Transverse colon (tissue), 4 donors: ENCODE measurements at regions of chr2 and their contacts with region 1.

Region 1: GRCh38 chr2:15560988-15561573 is at the start of gene NBAS:
- DNase-seq: peak; percentile 90
- H3K4me3 ChIP-seq: peak within 1 kb of the TSS; percentile 69 to 84 (median 76)
- H3K27ac ChIP-seq: peak within 1 kb of the TSS; percentile 76 to 82 (median 80)
- H3K4me1 ChIP-seq: peaks cover 4 to 23% (median 17%) of the 10 kb centered on the region in 4 donors
- H3K27me3 ChIP-seq: no peaks in the 10 kb centered on the region
- CTCF ChIP-seq: no peak
- EP300 ChIP-seq: no peak
- POLR2A ChIP-seq: no peak
- total RNA-seq, gene NBAS: 30.6 to 43.2 (median 34.5) TPM

Region 2: DNA sequence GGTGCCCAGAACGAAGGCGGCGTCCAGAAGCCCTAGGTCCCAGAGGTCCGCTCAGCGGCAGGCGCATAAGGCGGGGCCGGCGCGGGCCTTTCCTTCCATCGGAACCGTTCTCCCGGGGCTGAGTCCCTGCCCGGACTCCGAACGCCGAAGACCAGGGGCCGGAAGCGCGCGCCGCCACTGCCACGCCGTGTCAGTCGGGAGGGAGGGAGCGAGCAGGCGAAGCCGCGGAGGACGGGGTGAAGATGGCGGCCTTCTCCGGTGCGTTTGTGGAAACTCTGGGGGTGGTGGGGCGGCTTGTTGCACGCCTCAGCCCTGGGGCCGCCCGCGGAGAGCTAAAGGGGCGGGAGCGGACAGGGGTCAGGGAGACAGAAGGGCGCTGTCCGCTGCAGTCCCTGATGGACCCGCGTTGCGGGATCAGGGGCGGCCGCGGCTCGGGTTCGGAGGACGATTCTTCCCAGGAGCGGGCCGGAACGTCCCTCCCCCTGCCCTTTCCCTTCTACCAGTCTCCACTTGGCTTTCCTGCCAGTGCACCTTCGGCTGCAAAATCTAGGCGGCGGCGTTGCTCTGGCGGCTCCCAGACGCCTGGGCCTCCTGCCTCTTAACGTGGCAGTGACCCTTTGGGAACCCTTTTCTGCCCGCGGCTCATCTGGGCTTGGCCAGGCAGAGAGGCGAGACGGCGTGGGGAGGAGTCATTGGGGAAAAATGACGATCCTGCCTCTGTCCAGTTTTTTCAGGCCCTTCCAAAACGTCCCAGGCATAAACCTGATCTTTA is 30.8 kb after region 1 on chr2 and contains the start of gene DDX1:
- in situ Hi-C with region 1: no loop called
- intact Hi-C with region 1: loop called (anchors 1 kb)
- DNase-seq: peak; percentile 87
- H3K4me3 ChIP-seq: peak within 1 kb of the TSS; percentile 67 to 99 (median 88)
- H3K27ac ChIP-seq: peak within 1 kb of the TSS; percentile 93 to 99 (median 95)
- H3K4me1 ChIP-seq: peaks cover 5 to 21% (median 19%) of the 10 kb centered on the region in 4 donors
- H3K27me3 ChIP-seq: no peaks in the 10 kb centered on the region
- CTCF ChIP-seq: no peak
- EP300 ChIP-seq: no peak
- POLR2A ChIP-seq: peak; percentile 81
- total RNA-seq, gene DDX1: 18.3 to 61.1 (median 49.9) TPM

Region 3: DNA sequence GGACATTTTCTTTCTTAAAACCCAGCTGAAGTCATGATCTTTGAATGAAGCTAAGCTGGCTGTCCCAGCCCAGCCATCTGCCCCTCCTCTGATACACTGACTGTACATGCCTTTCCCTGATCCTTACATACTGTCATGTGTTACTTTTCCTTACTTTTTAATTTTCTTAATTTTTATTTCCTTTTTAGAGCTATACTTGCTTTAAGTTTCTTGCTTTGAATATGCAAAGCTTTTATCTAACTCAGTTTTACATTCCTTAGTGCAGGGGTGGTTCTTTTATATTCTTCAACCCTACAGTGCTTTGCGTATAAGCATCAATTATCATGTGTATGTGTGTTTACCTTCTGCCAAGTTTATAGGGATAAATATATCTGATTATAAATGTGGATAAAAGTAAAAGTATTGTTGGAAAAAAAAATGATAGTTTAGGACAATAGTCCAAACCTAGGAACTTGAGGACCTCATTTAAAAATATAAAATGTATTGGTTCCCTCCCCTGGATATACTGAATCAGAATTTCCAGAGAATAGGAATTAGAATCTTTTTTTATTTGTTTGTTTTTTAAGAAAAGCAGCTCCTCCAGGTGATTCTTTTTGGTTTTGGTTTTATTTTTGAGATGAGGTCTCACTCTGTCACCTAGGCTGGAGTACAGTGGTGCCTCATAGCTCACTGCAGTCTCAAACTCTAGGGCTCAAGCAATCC is 48.4 kb after region 1 on chr2:
- in situ Hi-C with region 1: no loop called
- intact Hi-C with region 1: no loop called
- DNase-seq: no peak
- H3K4me3 ChIP-seq: no peak overlapping the region
- H3K27ac ChIP-seq: no peak overlapping the region
- H3K4me1 ChIP-seq: no peaks in the 10 kb centered on the region
- H3K27me3 ChIP-seq: no peaks in the 10 kb centered on the region
- CTCF ChIP-seq: no peak
- EP300 ChIP-seq: no peak
- POLR2A ChIP-seq: no peak